CD8-positive, alpha-beta T cell (primary cell): ENCODE measurements at regions of chr10 and their contacts with region 1.

Region 1: GRCh38 chr10:60778214-60779029 is at the start of gene CDK1:
- DNase-seq: peak; percentile 86 to 96 (median 94)
- ATAC-seq: peak; percentile 97
- H3K4me3 ChIP-seq: peak within 1 kb of the TSS; percentile 70 to 77
- H3K4me3 Mint-ChIP-seq: peak within 1 kb of the TSS; percentile 96
- H3K27ac ChIP-seq: no peak within 1 kb of the TSS
- H3K27ac Mint-ChIP-seq: peak within 1 kb of the TSS; percentile 81
- H3K4me1 ChIP-seq: no peaks in the 10 kb centered on the region
- H3K4me1 Mint-ChIP-seq: peaks cover 13% of the 10 kb centered on the region
- H3K27me3 ChIP-seq: no peaks in the 10 kb centered on the region
- H3K27me3 Mint-ChIP-seq: peaks cover 3% of the 10 kb centered on the region
- CTCF ChIP-seq: no peak
- total RNA-seq, gene CDK1: 0.31 to 1.6 TPM

Region 2: DNA sequence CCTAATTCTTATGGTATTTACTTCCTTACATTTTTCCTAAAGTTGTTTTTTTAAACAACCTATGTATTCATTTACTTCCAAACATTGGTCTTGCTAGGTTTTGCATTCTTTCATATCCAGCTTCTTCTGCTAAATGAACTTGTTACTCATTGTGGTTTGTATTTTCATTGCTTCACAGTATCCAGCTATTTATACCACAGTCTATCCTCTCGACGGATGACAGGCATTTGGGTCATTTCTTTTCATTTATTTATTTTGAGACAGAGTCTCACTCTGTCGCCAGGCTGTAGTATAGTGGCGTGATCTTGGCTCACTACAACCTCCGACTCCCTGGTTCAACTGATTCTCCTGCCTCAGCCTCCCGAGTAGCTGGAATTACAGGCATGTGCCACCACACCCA is 938.8 kb before region 1 on chr10:
- CTCF ChIA-PET with region 1: no interaction called
- POLR2A ChIA-PET with region 1: no interaction called
- intact Hi-C with region 1: no loop called
- DNase-seq: no peak
- ATAC-seq: no peak
- H3K4me3 ChIP-seq: no peak overlapping the region
- H3K4me3 Mint-ChIP-seq: no peak overlapping the region
- H3K27ac ChIP-seq: no peak overlapping the region
- H3K27ac Mint-ChIP-seq: no peak overlapping the region
- H3K4me1 ChIP-seq: no peaks in the 10 kb centered on the region
- H3K4me1 Mint-ChIP-seq: peaks cover 29% of the 10 kb centered on the region
- H3K27me3 ChIP-seq: no peaks in the 10 kb centered on the region
- H3K27me3 Mint-ChIP-seq: no peaks in the 10 kb centered on the region
- CTCF ChIP-seq: no peak

Region 3: DNA sequence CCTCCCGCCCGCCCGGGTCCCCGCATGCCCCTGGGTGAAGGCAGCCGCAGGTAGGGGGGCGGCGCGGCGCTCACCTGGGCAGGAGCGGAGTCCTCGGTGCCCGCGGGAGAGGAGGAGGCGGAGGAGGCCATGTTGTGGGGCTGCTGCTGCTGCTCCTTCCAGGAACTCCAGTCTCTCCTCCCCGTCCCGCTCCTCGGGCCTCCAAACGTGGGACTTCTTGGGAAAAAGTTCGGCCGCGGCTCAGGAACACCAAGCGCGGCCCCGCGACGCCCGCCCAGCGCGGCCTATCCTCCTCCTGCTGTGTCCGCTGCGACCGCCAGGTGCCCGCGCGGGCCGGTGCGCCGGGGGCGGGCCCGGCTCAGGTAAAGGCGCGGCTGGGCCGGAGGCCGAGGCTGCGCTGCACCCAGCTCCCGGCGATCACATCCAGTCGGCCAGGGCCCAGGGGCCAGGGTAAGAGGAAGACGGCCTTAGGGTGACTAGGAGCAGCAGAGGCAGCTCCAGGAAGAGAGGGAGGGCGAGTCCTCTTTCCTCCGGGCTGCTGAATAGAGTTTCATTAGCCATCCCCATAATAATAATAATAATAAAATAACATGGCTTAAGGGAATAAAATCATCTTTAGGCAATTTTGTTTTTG is 45.1 kb before region 1 on chr10:
- CTCF ChIA-PET with region 1: no interaction called
- POLR2A ChIA-PET with region 1: no interaction called
- intact Hi-C with region 1: loop called in 1 of 2 experiments (anchors 2 kb)
- DNase-seq: peak in 6 of 9 experiments; percentile 27 to 64 (median 46)
- ATAC-seq: peak; percentile 72
- H3K4me3 ChIP-seq: peak overlapping the region; percentile 45 to 58
- H3K4me3 Mint-ChIP-seq: peak overlapping the region; percentile 91
- H3K27ac ChIP-seq: peak overlapping the region; percentile 39 to 59
- H3K27ac Mint-ChIP-seq: peak overlapping the region; percentile 34
- H3K4me1 ChIP-seq: peaks cover 22% of the 10 kb centered on the region
- H3K4me1 Mint-ChIP-seq: peaks cover 32% of the 10 kb centered on the region
- H3K27me3 ChIP-seq: no peaks in the 10 kb centered on the region
- H3K27me3 Mint-ChIP-seq: peaks cover 25% of the 10 kb centered on the region
- CTCF ChIP-seq: peak; percentile 52

Region 4: GRCh38 chr10:60801522-60801921 is 23.1 kb after region 1 on chr10:
- CTCF ChIA-PET with region 1: no interaction called
- POLR2A ChIA-PET with region 1: no interaction called
- intact Hi-C with region 1: no loop called
- DNase-seq: no peak
- ATAC-seq: no peak
- H3K4me3 ChIP-seq: no peak overlapping the region
- H3K4me3 Mint-ChIP-seq: no peak overlapping the region
- H3K27ac ChIP-seq: no peak overlapping the region
- H3K27ac Mint-ChIP-seq: no peak overlapping the region
- H3K4me1 ChIP-seq: no peaks in the 10 kb centered on the region
- H3K4me1 Mint-ChIP-seq: no peaks in the 10 kb centered on the region
- H3K27me3 ChIP-seq: no peaks in the 10 kb centered on the region
- H3K27me3 Mint-ChIP-seq: no peaks in the 10 kb centered on the region
- CTCF ChIP-seq: no peak

Region 5: DNA sequence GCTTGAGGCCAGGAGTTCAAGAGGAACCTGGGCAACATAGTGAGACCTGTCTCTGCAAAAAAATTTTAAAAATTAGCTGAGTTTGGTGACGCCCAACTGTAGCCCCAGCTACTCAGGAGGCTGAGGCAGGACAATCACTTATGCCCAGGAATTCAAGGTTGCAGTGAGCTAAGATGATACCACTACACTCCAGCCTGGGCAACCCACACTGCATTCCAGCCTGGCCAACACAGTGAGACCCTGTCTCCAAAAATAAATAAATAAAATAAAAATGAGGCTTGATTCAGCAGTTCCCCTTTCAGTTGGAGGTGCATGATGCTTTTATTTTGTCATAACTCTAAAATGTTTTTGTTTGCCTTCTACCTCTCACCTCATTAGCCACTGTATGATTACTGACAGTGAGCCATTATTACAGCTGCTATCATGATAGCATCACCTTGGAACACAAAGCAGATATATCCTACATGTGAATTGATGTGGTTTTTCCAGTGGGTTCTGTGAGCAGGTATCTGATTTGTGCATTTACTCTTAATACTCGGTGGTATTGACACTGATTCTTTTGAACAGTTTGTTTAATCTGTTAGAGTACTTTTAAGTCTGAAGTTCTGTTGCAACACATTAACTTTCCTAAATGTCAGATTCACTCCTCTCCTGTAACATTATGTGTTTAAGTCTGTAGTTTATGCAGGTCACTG is 1172.2 kb after region 1 on chr10:
- CTCF ChIA-PET with region 1: no interaction called
- POLR2A ChIA-PET with region 1: no interaction called
- intact Hi-C with region 1: loop called in 1 of 2 experiments (anchors 5 kb)
- DNase-seq: no peak
- ATAC-seq: no peak
- H3K4me3 ChIP-seq: no peak overlapping the region
- H3K4me3 Mint-ChIP-seq: no peak overlapping the region
- H3K27ac ChIP-seq: no peak overlapping the region
- H3K27ac Mint-ChIP-seq: no peak overlapping the region
- H3K4me1 ChIP-seq: no peaks in the 10 kb centered on the region
- H3K4me1 Mint-ChIP-seq: peaks cover 7% of the 10 kb centered on the region
- H3K27me3 ChIP-seq: no peaks in the 10 kb centered on the region
- H3K27me3 Mint-ChIP-seq: no peaks in the 10 kb centered on the region
- CTCF ChIP-seq: no peak